ENCODE measurements at regions of chr9 and their contacts with region 1.

Region 1: DNA sequence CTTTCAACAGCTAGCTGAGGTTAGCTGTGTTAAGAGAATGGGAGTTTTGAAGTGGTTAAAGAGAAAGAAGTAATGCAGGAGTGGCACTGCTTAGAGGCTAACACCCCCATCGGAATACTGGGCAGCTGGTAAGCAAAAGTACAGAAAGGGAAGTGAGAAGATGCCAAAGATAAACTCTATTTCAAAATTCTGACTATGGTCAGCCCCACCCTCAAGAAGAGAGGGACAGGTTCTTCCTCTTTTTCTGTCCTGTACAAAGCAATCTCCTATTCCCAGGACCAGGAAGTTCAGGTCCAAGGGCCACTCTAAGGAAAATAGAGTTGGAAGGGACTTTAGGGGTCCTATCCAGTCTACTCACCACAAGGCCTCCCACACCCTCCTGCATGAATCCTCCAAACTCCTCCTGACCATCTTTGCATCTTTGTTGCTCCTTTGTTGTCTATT is 45.9 kb upstream of the JAK2 start:
- DNase-seq: no peak
- ATAC-seq: peak; percentile 92
- H3K4me3 Mint-ChIP-seq: peak overlapping the region; percentile 42
- H3K27ac Mint-ChIP-seq: peak overlapping the region; percentile 79
- H3K4me1 Mint-ChIP-seq: peaks cover 60% of the 10 kb centered on the region
- H3K27me3 Mint-ChIP-seq: no peaks in the 10 kb centered on the region
- CTCF ChIP-seq: no peak

Region 2: GRCh38 chr9:4489919-4490704 is 449.0 kb before region 1 on chr9 and contains the start of gene SLC1A1:
- CTCF ChIA-PET with region 1: no interaction called
- POLR2A ChIA-PET with region 1: no interaction called
- intact Hi-C with region 1: no loop called
- DNase-seq: peak; percentile 24
- ATAC-seq: peak; percentile 81
- H3K4me3 Mint-ChIP-seq: peak within 1 kb of the TSS; percentile 79
- H3K27ac Mint-ChIP-seq: no peak within 1 kb of the TSS
- H3K4me1 Mint-ChIP-seq: peaks cover 19% of the 10 kb centered on the region
- H3K27me3 Mint-ChIP-seq: peaks cover 39% of the 10 kb centered on the region
- CTCF ChIP-seq: no peak
- total RNA-seq, gene SLC1A1: 1.4 and 2.0 TPM in 2 replicates

Region 3: DNA sequence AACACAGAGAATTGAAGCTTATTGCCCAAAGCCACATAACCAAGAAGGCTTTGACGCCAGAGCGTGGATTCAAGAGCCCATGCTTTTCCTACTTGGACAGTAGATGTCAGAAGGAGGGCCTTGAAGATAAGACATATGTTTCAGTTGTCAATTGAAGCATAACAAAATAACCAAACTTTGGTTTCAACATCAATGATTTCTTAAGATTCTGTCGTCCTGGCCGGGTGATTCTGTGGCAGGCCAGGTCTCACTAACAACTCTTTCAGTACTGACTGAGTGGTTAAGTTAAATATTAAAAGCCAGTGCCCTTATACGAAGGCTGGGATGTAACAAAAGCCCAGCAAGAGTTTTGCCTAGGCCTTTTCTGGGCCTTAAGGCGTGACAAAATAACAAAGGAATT is 52.4 kb before region 1 on chr9:
- CTCF ChIA-PET with region 1: no interaction called
- POLR2A ChIA-PET with region 1: no interaction called
- intact Hi-C with region 1: loop called (anchors 10 kb)
- DNase-seq: no peak
- ATAC-seq: peak; percentile 72
- H3K4me3 Mint-ChIP-seq: no peak overlapping the region
- H3K27ac Mint-ChIP-seq: peak overlapping the region; percentile 24
- H3K4me1 Mint-ChIP-seq: peaks cover 14% of the 10 kb centered on the region
- H3K27me3 Mint-ChIP-seq: no peaks in the 10 kb centered on the region
- CTCF ChIP-seq: no peak

Region 4: GRCh38 chr9:4970970-4971641 is 32.0 kb after region 1 on chr9:
- CTCF ChIA-PET with region 1: interaction called, 3 read pairs
- POLR2A ChIA-PET with region 1: interaction called, 11 read pairs
- intact Hi-C with region 1: loop called (anchors 1 kb)
- DNase-seq: no peak
- ATAC-seq: peak; percentile 91
- H3K4me3 Mint-ChIP-seq: no peak overlapping the region
- H3K27ac Mint-ChIP-seq: no peak overlapping the region
- H3K4me1 Mint-ChIP-seq: peaks cover 18% of the 10 kb centered on the region
- H3K27me3 Mint-ChIP-seq: no peaks in the 10 kb centered on the region
- CTCF ChIP-seq: no peak

Measured in activated B cell treated with CpG ODN at 0.5 μM for 24 hours (primary cell).